Naive thymus-derived CD4-positive, alpha-beta T cell (primary cell): ENCODE measurements at regions of chr2 and their contacts with region 1.

Region 1: GRCh38 chr2:198309673-198310280 is 505.4 kb downstream of the PLCL1 start:
- DNase-seq: peak in 8 of 9 donors; percentile 15 to 67 (median 47)
- ATAC-seq: peak; percentile 68
- H3K4me3 ChIP-seq: no peak overlapping the region
- H3K4me3 Mint-ChIP-seq: no peak overlapping the region
- H3K27ac ChIP-seq: no peak overlapping the region
- H3K27ac Mint-ChIP-seq: no peak overlapping the region
- H3K4me1 ChIP-seq: no peaks in the 10 kb centered on the region
- H3K4me1 Mint-ChIP-seq: peaks cover 0 to 6% (median 0%) of the 10 kb centered on the region in 7 donors
- H3K27me3 ChIP-seq: peaks cover 0 to 3% of the 10 kb centered on the region in 2 donors
- H3K27me3 Mint-ChIP-seq: peaks cover 24 to 44% (median 40%) of the 10 kb centered on the region in 5 donors

Region 2: GRCh38 chr2:196639180-196640030 is 1670.4 kb before region 1 on chr2 and contains the start of gene CCDC150:
- CTCF ChIA-PET with region 1: no interaction called
- POLR2A ChIA-PET with region 1: no interaction called
- intact Hi-C with region 1: loop called in 1 of 2 experiments (anchors 5 kb)
- DNase-seq: peak; percentile 88 to 95 (median 94)
- ATAC-seq: peak; percentile 100
- H3K4me3 ChIP-seq: peak within 1 kb of the TSS; percentile 86
- H3K4me3 Mint-ChIP-seq: peak within 1 kb of the TSS; percentile 82 to 92 (median 88)
- H3K27ac ChIP-seq: peak within 1 kb of the TSS; percentile 48
- H3K27ac Mint-ChIP-seq: peak within 1 kb of the TSS in 8 of 9 donors; percentile 30 to 78 (median 43)
- H3K4me1 ChIP-seq: peaks cover 7 to 8% of the 10 kb centered on the region in 2 donors
- H3K4me1 Mint-ChIP-seq: peaks cover 4 to 26% (median 19%) of the 10 kb centered on the region in 7 donors
- H3K27me3 ChIP-seq: no peaks in the 10 kb centered on the region
- H3K27me3 Mint-ChIP-seq: peaks cover 0 to 15% (median 0%) of the 10 kb centered on the region in 5 donors
- total RNA-seq, gene CCDC150: 0.13 to 11.2 (median 1.2) TPM

Region 3: GRCh38 chr2:197931661-197932312 is 378.0 kb before region 1 on chr2:
- CTCF ChIA-PET with region 1: no interaction called
- POLR2A ChIA-PET with region 1: no interaction called
- intact Hi-C with region 1: no loop called
- DNase-seq: no peak
- ATAC-seq: no peak
- H3K4me3 ChIP-seq: no peak overlapping the region
- H3K4me3 Mint-ChIP-seq: no peak overlapping the region
- H3K27ac ChIP-seq: no peak overlapping the region
- H3K27ac Mint-ChIP-seq: peak overlapping the region in 1 of 9 donors; percentile 49
- H3K4me1 ChIP-seq: peaks cover 0 to 16% of the 10 kb centered on the region in 2 donors
- H3K4me1 Mint-ChIP-seq: peaks cover 21 to 89% (median 76%) of the 10 kb centered on the region in 7 donors
- H3K27me3 ChIP-seq: no peaks in the 10 kb centered on the region
- H3K27me3 Mint-ChIP-seq: peaks cover 0 to 1% (median 0%) of the 10 kb centered on the region in 5 donors

Region 4: GRCh38 chr2:199488772-199489400 is 1179.1 kb after region 1 on chr2:
- CTCF ChIA-PET with region 1: interaction called, 29 read pairs
- POLR2A ChIA-PET with region 1: no interaction called
- intact Hi-C with region 1: loop called (anchors 1 kb)
- DNase-seq: peak in 5 of 9 donors; percentile 28 to 54 (median 42)
- ATAC-seq: peak; percentile 70
- H3K4me3 ChIP-seq: no peak overlapping the region
- H3K4me3 Mint-ChIP-seq: no peak overlapping the region
- H3K27ac ChIP-seq: no peak overlapping the region
- H3K27ac Mint-ChIP-seq: no peak overlapping the region
- H3K4me1 ChIP-seq: no peaks in the 10 kb centered on the region
- H3K4me1 Mint-ChIP-seq: no peaks in the 10 kb centered on the region
- H3K27me3 ChIP-seq: no peaks in the 10 kb centered on the region
- H3K27me3 Mint-ChIP-seq: peaks cover 9 to 49% (median 32%) of the 10 kb centered on the region in 5 donors

Region 5: GRCh38 chr2:199596549-199596948 is 1286.8 kb after region 1 on chr2:
- CTCF ChIA-PET with region 1: no interaction called
- POLR2A ChIA-PET with region 1: no interaction called
- intact Hi-C with region 1: loop called (anchors 1 to 2 kb)
- DNase-seq: no peak
- ATAC-seq: peak; percentile 38
- H3K4me3 ChIP-seq: no peak overlapping the region
- H3K4me3 Mint-ChIP-seq: no peak overlapping the region
- H3K27ac ChIP-seq: no peak overlapping the region
- H3K27ac Mint-ChIP-seq: no peak overlapping the region
- H3K4me1 ChIP-seq: no peaks in the 10 kb centered on the region
- H3K4me1 Mint-ChIP-seq: no peaks in the 10 kb centered on the region
- H3K27me3 ChIP-seq: no peaks in the 10 kb centered on the region
- H3K27me3 Mint-ChIP-seq: peaks cover 9 to 17% (median 16%) of the 10 kb centered on the region in 5 donors

Region 6: GRCh38 chr2:199739413-199740110 is 1429.8 kb after region 1 on chr2:
- CTCF ChIA-PET with region 1: interaction called, 28 read pairs
- POLR2A ChIA-PET with region 1: no interaction called
- intact Hi-C with region 1: loop called (anchors 1 kb)
- DNase-seq: peak in 8 of 9 donors; percentile 13 to 57 (median 34)
- ATAC-seq: peak; percentile 73
- H3K4me3 ChIP-seq: no peak overlapping the region
- H3K4me3 Mint-ChIP-seq: peak overlapping the region in 2 of 10 donors; percentile 8 to 10
- H3K27ac ChIP-seq: no peak overlapping the region
- H3K27ac Mint-ChIP-seq: no peak overlapping the region
- H3K4me1 ChIP-seq: no peaks in the 10 kb centered on the region
- H3K4me1 Mint-ChIP-seq: peaks cover 0 to 7% (median 5%) of the 10 kb centered on the region in 7 donors
- H3K27me3 ChIP-seq: no peaks in the 10 kb centered on the region
- H3K27me3 Mint-ChIP-seq: peaks cover 6 to 32% (median 19%) of the 10 kb centered on the region in 5 donors

Region 7: GRCh38 chr2:199861132-199861774 is 1551.5 kb after region 1 on chr2:
- CTCF ChIA-PET with region 1: no interaction called
- POLR2A ChIA-PET with region 1: no interaction called
- intact Hi-C with region 1: loop called in 1 of 2 experiments (anchors 1 kb)
- DNase-seq: peak in 1 of 9 donors; percentile 3
- ATAC-seq: peak; percentile 42
- H3K4me3 ChIP-seq: no peak overlapping the region
- H3K4me3 Mint-ChIP-seq: no peak overlapping the region
- H3K27ac ChIP-seq: no peak overlapping the region
- H3K27ac Mint-ChIP-seq: no peak overlapping the region
- H3K4me1 ChIP-seq: no peaks in the 10 kb centered on the region
- H3K4me1 Mint-ChIP-seq: no peaks in the 10 kb centered on the region
- H3K27me3 ChIP-seq: no peaks in the 10 kb centered on the region
- H3K27me3 Mint-ChIP-seq: peaks cover 6 to 57% (median 17%) of the 10 kb centered on the region in 5 donors

Region 8: DNA sequence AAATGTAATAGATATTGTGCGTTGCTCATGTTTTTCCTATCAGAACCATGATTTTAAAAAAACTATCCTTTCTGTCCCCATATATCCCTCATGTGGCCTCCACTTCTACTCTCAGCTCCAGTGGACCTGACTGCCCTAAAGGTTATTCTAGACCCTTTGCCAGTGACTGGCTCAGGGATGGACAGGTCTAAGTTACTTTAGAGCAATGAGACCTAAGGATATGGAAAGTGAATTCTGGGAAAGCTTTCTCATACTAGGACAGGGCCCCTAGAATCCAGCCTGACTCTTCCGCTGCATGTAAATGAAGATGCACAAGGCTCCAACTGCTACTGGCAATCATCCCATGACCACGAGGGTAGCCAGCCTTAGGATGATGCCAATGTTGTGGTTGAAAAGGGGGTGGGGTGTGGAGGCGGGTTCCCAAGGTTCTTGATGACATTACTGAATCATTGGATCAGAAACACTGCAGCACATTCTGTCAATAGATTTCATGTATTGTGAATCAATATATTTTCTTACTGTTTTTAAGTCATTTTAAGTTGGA is 1622.6 kb after region 1 on chr2:
- CTCF ChIA-PET with region 1: no interaction called
- POLR2A ChIA-PET with region 1: no interaction called
- intact Hi-C with region 1: loop called in 1 of 2 experiments (anchors 10 kb)
- DNase-seq: no peak
- ATAC-seq: no peak
- H3K4me3 ChIP-seq: no peak overlapping the region
- H3K4me3 Mint-ChIP-seq: no peak overlapping the region
- H3K27ac ChIP-seq: no peak overlapping the region
- H3K27ac Mint-ChIP-seq: peak overlapping the region in 3 of 9 donors; percentile 0 to 70 (median 33)
- H3K4me1 ChIP-seq: no peaks in the 10 kb centered on the region
- H3K4me1 Mint-ChIP-seq: peaks cover 0 to 15% (median 5%) of the 10 kb centered on the region in 7 donors
- H3K27me3 ChIP-seq: no peaks in the 10 kb centered on the region
- H3K27me3 Mint-ChIP-seq: no peaks in the 10 kb centered on the region